ENCODE measurements at regions of chr6 and their contacts with region 1.

Region 1: GRCh38 chr6:169701954-169702839 is at the starts of genes C6orf120 and WDR27:
- DNase-seq: peak; percentile 99
- ATAC-seq: peak; percentile 92
- H3K4me3 Mint-ChIP-seq: peak within 1 kb of the TSS; percentile 88
- H3K27ac Mint-ChIP-seq: peak within 1 kb of the TSS; percentile 88
- H3K4me1 Mint-ChIP-seq: peaks cover 37% of the 10 kb centered on the region
- H3K27me3 Mint-ChIP-seq: no peaks in the 10 kb centered on the region
- total RNA-seq, gene C6orf120: 14.7 to 15.6 TPM
- total RNA-seq, gene WDR27: 34.3 to 36.2 TPM

Region 2: GRCh38 chr6:169212897-169213813 is 489.0 kb before region 1 on chr6:
- CTCF ChIA-PET with region 1: no interaction called
- POLR2A ChIA-PET with region 1: no interaction called
- intact Hi-C with region 1: loop called (anchors 5 kb)
- DNase-seq: peak; percentile 95
- ATAC-seq: peak; percentile 100
- H3K4me3 Mint-ChIP-seq: peak overlapping the region; percentile 54
- H3K27ac Mint-ChIP-seq: peak overlapping the region; percentile 59
- H3K4me1 Mint-ChIP-seq: peaks cover 16% of the 10 kb centered on the region
- H3K27me3 Mint-ChIP-seq: no peaks in the 10 kb centered on the region

Region 3: DNA sequence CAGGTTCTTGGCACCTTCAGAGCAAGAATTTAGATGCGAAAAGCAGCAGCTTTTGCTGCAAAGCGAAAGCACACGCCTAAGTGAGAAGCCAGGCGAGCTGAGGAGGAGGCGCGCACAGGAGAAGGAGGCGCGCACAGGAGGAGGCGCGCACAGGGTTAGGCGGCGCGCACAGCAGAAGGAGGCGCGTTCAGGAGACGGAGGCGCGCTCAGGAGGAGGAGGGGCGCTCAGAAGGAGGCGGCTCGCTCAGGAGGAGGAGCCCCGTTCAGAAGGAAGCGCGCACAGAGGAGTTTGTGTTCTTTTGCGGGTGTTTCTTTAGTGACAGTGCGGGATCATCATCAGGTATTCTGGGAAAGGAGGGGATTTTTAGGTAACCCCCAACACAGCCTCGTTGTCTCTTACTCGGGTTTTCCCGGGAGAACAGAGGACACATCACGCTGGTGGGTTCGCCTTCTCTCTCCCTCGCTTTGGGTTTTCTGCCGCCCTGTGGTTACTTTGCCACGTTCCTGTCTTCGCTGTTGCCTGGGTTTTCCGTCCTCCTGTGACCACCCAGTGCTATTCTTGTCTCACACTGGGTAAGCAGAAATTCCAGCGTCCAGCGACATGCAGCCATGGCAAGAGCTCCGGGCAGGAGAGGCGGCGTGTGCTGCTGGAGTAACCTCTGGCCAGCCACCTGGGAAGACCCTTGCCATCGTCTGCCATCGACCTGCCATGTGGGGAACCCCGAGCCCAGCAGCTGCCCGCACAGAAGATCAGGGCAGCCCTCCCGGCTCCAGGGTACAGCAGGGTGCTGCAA is 47.4 kb before region 1 on chr6:
- CTCF ChIA-PET with region 1: no interaction called
- POLR2A ChIA-PET with region 1: no interaction called
- intact Hi-C with region 1: loop called (anchors 1 to 2 kb)
- DNase-seq: peak; percentile 83
- ATAC-seq: peak; percentile 95
- H3K4me3 Mint-ChIP-seq: peak overlapping the region; percentile 74
- H3K27ac Mint-ChIP-seq: peak overlapping the region; percentile 75
- H3K4me1 Mint-ChIP-seq: peaks cover 7% of the 10 kb centered on the region
- H3K27me3 Mint-ChIP-seq: no peaks in the 10 kb centered on the region

Region 4: GRCh38 chr6:169751242-169752073 is 49.3 kb after region 1 on chr6 and contains the starts of genes DYNLT2 and ERMARD:
- CTCF ChIA-PET with region 1: interaction called, 3 read pairs
- POLR2A ChIA-PET with region 1: interaction called, 14 read pairs
- intact Hi-C with region 1: loop called (anchors 1 kb)
- DNase-seq: peak; percentile 96
- ATAC-seq: peak; percentile 96
- H3K4me3 Mint-ChIP-seq: peak within 1 kb of the TSS; percentile 95
- H3K27ac Mint-ChIP-seq: peak within 1 kb of the TSS; percentile 97
- H3K4me1 Mint-ChIP-seq: peaks cover 23% of the 10 kb centered on the region
- H3K27me3 Mint-ChIP-seq: no peaks in the 10 kb centered on the region
- total RNA-seq, gene DYNLT2: 2.0 to 2.4 TPM
- total RNA-seq, gene ERMARD: 19.2 to 30.2 TPM

Region 5: DNA sequence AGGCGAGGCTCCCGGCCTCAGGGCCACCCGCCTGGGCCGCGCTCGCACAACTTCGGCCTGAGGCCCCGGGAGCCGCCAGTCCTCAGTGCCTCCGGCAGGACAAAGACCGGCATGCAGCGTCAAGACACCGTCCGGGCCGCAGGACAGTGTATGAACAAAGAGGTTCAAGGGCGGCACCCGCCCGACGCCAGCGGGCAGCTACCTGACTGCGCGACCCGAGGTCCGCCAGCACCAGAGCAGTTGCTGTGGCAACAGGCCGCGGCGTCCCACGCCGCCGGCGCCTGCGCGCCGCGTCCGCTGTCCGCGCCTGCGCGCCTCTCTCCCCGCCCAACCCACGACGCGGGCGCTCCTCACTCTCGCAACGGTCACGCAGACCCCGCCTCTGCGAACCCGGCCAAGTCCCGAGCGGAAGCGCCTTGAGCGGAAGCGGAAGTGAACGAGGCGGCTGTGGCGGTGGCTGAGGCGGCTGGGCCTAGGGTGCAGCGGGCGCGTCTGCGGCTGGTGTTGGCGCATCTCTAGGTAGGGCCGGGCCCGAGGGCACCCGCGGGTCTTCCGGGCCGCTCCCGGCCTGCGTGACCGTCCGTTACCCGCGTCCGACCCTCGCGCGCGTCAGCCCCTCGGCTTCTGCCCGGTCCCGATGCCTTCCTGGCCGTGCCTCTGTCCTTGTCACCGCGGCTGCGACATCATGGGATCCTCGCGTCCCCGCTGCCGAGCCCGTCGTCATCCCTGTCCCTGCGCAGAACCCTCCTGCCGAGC is 604.3 kb after region 1 on chr6 and contains the start of gene FAM120B:
- CTCF ChIA-PET with region 1: no interaction called
- POLR2A ChIA-PET with region 1: no interaction called
- intact Hi-C with region 1: loop called in 1 of 2 experiments (anchors 2 kb)
- DNase-seq: peak; percentile 96
- ATAC-seq: peak; percentile 97
- H3K4me3 Mint-ChIP-seq: peak within 1 kb of the TSS; percentile 100
- H3K27ac Mint-ChIP-seq: peak within 1 kb of the TSS; percentile 98
- H3K4me1 Mint-ChIP-seq: peaks cover 40% of the 10 kb centered on the region
- H3K27me3 Mint-ChIP-seq: peaks cover 14% of the 10 kb centered on the region
- total RNA-seq, gene FAM120B: 21.9 to 26.3 TPM

Region 6: DNA sequence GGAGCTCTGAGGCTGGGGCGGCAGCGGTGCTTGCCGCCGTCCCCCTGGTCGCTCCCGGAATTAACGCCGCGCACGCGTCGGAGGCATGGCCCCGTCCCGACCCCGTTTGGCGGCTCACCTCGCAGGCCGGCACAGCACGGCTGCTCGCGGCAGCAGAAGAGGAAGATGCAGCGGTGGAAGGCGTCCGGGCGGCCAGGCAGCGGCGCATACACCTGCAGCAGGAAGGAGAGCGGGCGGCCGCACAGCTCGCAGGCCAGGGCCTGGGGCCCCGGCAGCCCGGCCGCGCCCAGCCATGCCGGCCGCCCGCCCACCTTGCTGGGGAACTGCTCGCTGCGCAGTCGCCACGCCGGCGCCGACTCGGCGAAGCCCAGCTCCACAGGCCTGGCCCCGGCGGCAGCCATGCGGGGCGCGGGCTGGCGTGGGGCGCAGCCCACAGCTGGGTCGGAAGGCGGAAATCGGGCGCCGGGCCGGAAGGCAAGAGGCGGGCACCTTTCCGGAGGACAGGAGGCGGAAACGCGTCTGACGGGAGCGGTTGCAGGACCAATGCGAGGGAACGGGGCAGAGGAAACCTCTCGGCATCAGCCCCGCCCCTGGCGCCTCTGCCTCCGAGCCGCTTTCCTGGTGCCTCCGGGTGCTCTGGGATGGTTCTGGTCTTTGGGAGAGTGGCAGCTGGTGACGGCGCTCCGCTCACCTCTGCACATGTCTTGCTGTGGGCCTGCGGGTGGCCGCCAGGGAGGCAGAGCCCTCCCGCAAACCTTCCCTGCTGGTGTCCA is 882.2 kb after region 1 on chr6 and contains the start of gene PDCD2:
- CTCF ChIA-PET with region 1: no interaction called
- POLR2A ChIA-PET with region 1: no interaction called
- intact Hi-C with region 1: loop called in 1 of 2 experiments (anchors 1 kb)
- DNase-seq: peak; percentile 96
- ATAC-seq: peak; percentile 96
- H3K4me3 Mint-ChIP-seq: peak within 1 kb of the TSS; percentile 91
- H3K27ac Mint-ChIP-seq: peak within 1 kb of the TSS; percentile 95
- H3K4me1 Mint-ChIP-seq: peaks cover 30% of the 10 kb centered on the region
- H3K27me3 Mint-ChIP-seq: no peaks in the 10 kb centered on the region
- total RNA-seq, gene PDCD2: 133 to 152 TPM

Measured in activated CD4-positive, alpha-beta T cell treated with anti-CD3 and anti-CD28 coated beads for 36 hours (primary cell).